ENCODE measurements at regions of chr5 and their contacts with region 1.

Region 1: GRCh38 chr5:65742565-65743231 is 20.7 kb downstream of the NLN start:
- DNase-seq: peak; percentile 56
- H3K4me3 ChIP-seq: no peak overlapping the region
- H3K27ac ChIP-seq: no peak overlapping the region
- H3K4me1 ChIP-seq: no peaks in the 10 kb centered on the region
- CTCF ChIP-seq: peak; percentile 89

Region 2: GRCh38 chr5:66021585-66021984 is 278.9 kb after region 1 on chr5:
- CTCF ChIA-PET with region 1: no interaction called
- POLR2A ChIA-PET with region 1: interaction called, 3 read pairs
- intact Hi-C with region 1: loop called (anchors 10 kb)
- DNase-seq: no peak
- H3K4me3 ChIP-seq: no peak overlapping the region
- H3K27ac ChIP-seq: no peak overlapping the region
- H3K4me1 ChIP-seq: no peaks in the 10 kb centered on the region
- CTCF ChIP-seq: no peak

Measured in OCI-LY7 (cell line).